CD14-positive monocyte (primary cell): ENCODE measurements at regions of chr14 and their contacts with region 1.

Region 1: DNA sequence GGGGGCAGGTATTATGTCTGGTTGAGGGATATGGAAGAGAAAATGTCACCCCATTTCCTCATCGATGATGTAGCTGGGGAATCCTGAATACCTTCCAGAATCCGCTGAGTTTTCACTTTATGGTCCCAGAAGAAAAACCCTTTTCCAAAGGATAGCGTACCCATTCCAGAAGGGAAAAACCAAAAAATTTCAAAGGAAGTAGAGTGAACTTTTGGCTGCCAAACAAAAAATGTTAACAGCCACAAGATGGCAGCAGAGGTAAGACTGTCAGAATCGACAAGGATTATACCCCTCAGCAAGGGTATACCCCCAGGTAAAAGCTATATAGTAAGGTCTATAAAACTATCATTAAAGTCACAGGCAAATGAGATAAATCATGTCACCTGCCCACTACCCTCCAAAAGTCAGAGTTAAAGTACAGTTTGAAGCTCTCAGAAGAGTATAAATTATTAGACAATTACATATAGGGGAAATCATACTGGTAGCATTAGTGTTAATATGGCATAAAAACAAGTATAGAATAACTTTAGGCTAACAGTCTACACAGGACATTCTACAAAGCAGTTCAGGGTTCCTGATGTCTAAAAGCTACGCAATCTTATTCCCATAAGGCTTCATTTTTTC is 18.0 kb downstream of the ACIN1 start:
- DNase-seq: peak in 2 of 3 donors; percentile 34 to 40
- H3K4me3 ChIP-seq: no peak overlapping the region
- H3K4me3 Mint-ChIP-seq: no peak overlapping the region
- H3K27ac ChIP-seq: peak overlapping the region in 1 of 2 donors; percentile 75
- H3K27ac Mint-ChIP-seq: peak overlapping the region in 5 of 7 donors; percentile 8 to 89 (median 50)
- H3K4me1 ChIP-seq: peaks cover 28 to 44% of the 10 kb centered on the region in 2 donors
- H3K4me1 Mint-ChIP-seq: peaks cover 33% of the 10 kb centered on the region
- H3K27me3 ChIP-seq: no peaks in the 10 kb centered on the region
- H3K27me3 Mint-ChIP-seq: no peaks in the 10 kb centered on the region
- CTCF ChIP-seq: peak; percentile 89

Region 2: GRCh38 chr14:22986508-22987054 is 90.3 kb before region 1 on chr14:
- intact Hi-C with region 1: no loop called
- DNase-seq: peak; percentile 73 to 84 (median 81)
- H3K4me3 ChIP-seq: no peak overlapping the region
- H3K4me3 Mint-ChIP-seq: no peak overlapping the region
- H3K27ac ChIP-seq: no peak overlapping the region
- H3K27ac Mint-ChIP-seq: no peak overlapping the region
- H3K4me1 ChIP-seq: peaks cover 16 to 17% of the 10 kb centered on the region in 2 donors
- H3K4me1 Mint-ChIP-seq: no peaks in the 10 kb centered on the region
- H3K27me3 ChIP-seq: peaks cover 6 to 8% of the 10 kb centered on the region in 2 donors
- H3K27me3 Mint-ChIP-seq: peaks cover 0 to 4% (median 4%) of the 10 kb centered on the region in 3 donors
- CTCF ChIP-seq: peak; percentile 86

Region 3: GRCh38 chr14:23089498-23090253 is 12.8 kb after region 1 on chr14:
- intact Hi-C with region 1: no loop called
- DNase-seq: no peak
- H3K4me3 ChIP-seq: no peak overlapping the region
- H3K4me3 Mint-ChIP-seq: no peak overlapping the region
- H3K27ac ChIP-seq: no peak overlapping the region
- H3K27ac Mint-ChIP-seq: peak overlapping the region in 2 of 7 donors; percentile 5
- H3K4me1 ChIP-seq: peaks cover 16 to 33% of the 10 kb centered on the region in 2 donors
- H3K4me1 Mint-ChIP-seq: peaks cover 11% of the 10 kb centered on the region
- H3K27me3 ChIP-seq: no peaks in the 10 kb centered on the region
- H3K27me3 Mint-ChIP-seq: no peaks in the 10 kb centered on the region
- CTCF ChIP-seq: no peak

Region 4: DNA sequence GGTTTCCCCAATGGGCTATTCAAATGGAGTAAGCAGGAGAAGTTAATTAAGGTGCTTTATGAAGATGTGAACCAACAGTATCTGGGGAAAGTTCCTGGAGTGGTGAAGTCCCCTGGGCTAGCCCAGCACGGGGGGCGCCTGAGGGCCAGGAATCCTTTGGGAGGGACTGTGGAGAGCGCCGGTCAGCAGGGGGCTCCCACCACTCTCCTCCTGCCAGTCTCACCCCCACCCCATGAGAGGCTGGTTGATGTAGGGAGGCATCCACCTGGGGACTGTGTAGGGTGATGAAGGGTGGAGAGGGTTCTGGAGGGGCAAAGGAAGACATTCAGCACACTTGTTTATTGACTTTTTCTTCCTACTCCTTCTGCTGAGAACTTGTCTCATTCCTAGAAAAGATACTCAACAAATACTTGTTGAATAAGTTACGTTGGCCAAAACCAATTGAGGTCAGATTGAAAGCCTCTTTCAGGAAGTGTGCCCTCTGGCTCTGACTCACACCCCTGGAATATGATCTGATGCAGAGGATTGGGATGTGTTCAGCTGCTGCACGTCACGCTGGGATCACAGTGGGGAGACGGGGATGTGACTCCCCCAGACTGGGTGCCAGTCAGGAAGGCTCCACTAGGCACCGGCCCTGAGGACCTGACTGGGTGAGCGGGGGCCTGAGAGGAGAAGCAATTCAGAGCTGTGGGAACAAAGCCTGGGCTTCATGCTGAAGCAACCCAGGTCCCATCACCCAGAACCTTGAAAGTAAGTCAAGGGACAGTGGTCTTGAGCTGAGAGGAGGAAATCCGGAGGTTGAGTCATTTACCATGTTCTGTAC is 38.0 kb after region 1 on chr14:
- intact Hi-C with region 1: loop called in 1 of 2 experiments (anchors 5 kb)
- DNase-seq: peak; percentile 38 to 72 (median 62)
- H3K4me3 ChIP-seq: no peak overlapping the region
- H3K4me3 Mint-ChIP-seq: no peak overlapping the region
- H3K27ac ChIP-seq: no peak overlapping the region
- H3K27ac Mint-ChIP-seq: peak overlapping the region in 4 of 7 donors; percentile 17 to 77 (median 37)
- H3K4me1 ChIP-seq: peaks cover 63 to 84% of the 10 kb centered on the region in 2 donors
- H3K4me1 Mint-ChIP-seq: peaks cover 66% of the 10 kb centered on the region
- H3K27me3 ChIP-seq: no peaks in the 10 kb centered on the region
- H3K27me3 Mint-ChIP-seq: peaks cover 0 to 4% (median 0%) of the 10 kb centered on the region in 3 donors
- CTCF ChIP-seq: no peak

Region 5: DNA sequence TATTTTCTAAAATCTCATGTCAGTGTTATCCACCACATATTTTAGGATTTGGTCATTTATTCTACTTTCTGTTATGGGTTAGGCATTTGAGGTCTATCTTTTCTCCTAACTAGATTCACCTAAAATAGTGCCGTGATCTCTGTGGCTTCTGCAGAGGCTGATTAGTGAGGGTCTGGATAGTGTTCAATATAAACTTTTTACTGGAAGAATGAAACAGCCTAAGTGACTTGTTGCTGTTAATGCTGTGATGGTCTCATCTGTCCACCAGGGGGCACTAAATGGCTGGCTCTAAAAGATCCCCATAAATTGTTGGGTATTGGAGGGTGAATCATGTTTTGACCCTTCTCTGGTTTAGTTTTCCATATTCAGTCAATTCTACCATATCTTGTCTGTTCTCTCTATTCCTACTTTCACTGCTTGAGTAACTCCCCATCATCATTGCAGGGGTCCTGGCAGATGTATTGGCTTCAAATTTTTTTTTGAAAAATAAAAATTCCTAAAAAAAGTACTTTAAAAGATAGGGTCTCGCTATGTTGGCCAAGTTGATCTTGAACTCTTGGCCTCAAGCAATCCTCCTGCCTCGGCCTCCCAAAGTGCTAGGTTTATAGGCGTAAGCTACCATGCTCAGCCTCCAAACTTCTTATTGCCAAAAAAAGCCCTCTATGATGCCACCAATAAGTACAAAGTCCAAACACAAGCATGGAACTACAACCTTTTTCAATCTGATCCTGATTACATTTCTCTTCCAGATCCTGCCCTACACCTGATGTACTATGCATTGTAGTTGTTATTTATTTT is 251.2 kb after region 1 on chr14:
- intact Hi-C with region 1: no loop called
- DNase-seq: peak; percentile 55 to 77 (median 74)
- H3K4me3 ChIP-seq: no peak overlapping the region
- H3K4me3 Mint-ChIP-seq: no peak overlapping the region
- H3K27ac ChIP-seq: no peak overlapping the region
- H3K27ac Mint-ChIP-seq: no peak overlapping the region
- H3K4me1 ChIP-seq: peaks cover under 1% of the 10 kb centered on the region in 2 donors
- H3K4me1 Mint-ChIP-seq: peaks cover 2% of the 10 kb centered on the region
- H3K27me3 ChIP-seq: no peaks in the 10 kb centered on the region
- H3K27me3 Mint-ChIP-seq: peaks cover 0 to 6% (median 3%) of the 10 kb centered on the region in 3 donors
- CTCF ChIP-seq: peak; percentile 89